Spleen (tissue), 13 donors: ENCODE measurements at regions of chr3 and their contacts with region 1.

Region 1: GRCh38 chr3:32467333-32468070 is 35.1 kb downstream of the CMTM6 start:
- DNase-seq: peak; percentile 96
- H3K4me3 ChIP-seq: peak overlapping the region; percentile 13 to 66 (median 37)
- H3K27ac ChIP-seq: peak overlapping the region; percentile 61 to 83 (median 77)
- H3K4me1 ChIP-seq: peaks cover 20 to 69% (median 47%) of the 10 kb centered on the region in 6 donors
- H3K27me3 ChIP-seq: no peaks in the 10 kb centered on the region
- CTCF ChIP-seq: peak; percentile 95 to 100 (median 98)
- POLR2A ChIP-seq: no peak

Region 2: GRCh38 chr3:32371461-32372212 is 95.9 kb before region 1 on chr3:
- intact Hi-C with region 1: loop called (anchors 2 kb)
- DNase-seq: no peak
- H3K4me3 ChIP-seq: no peak overlapping the region
- H3K27ac ChIP-seq: peak overlapping the region in 3 of 8 donors; percentile 41 to 66 (median 52)
- H3K4me1 ChIP-seq: peaks cover 0 to 21% (median 7%) of the 10 kb centered on the region in 6 donors
- H3K27me3 ChIP-seq: no peaks in the 10 kb centered on the region
- CTCF ChIP-seq: no peak
- POLR2A ChIP-seq: no peak

Region 3: DNA sequence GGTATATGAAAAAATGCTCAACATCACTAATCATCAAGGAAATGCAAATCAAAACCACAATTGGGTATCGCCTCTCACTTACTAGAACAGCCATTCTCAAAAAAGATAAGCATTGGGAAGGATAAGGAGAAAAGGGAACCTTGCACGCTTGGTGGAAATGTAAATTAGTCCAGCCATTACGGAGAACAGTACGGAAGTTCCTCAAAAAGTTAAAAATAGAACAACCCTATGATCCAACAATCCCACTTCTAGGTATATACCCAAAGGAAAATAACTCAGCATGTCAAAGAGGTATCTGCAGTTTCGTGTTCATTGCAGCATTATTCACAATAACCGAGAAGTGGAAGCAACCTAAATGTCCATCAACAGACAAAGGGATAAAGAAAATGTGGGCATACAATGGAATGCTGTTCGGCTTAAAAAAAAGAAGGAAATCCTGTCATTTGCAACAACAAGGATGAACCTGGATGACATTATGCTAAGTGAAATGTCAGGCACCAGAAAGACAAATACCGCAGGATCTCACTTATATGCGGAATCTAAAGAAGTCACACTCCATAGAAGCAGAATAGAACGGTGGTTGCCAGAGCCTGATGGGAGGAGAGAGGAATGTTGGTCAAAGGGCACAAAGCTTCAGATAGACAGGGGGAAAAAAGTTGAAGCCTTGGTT is 87.5 kb before region 1 on chr3:
- intact Hi-C with region 1: loop called (anchors 2 kb)
- DNase-seq: no peak
- H3K4me3 ChIP-seq: no peak overlapping the region
- H3K27ac ChIP-seq: no peak overlapping the region
- H3K4me1 ChIP-seq: peaks cover 0 to 13% (median 4%) of the 10 kb centered on the region in 6 donors
- H3K27me3 ChIP-seq: no peaks in the 10 kb centered on the region
- CTCF ChIP-seq: no peak
- POLR2A ChIP-seq: no peak

Region 4: DNA sequence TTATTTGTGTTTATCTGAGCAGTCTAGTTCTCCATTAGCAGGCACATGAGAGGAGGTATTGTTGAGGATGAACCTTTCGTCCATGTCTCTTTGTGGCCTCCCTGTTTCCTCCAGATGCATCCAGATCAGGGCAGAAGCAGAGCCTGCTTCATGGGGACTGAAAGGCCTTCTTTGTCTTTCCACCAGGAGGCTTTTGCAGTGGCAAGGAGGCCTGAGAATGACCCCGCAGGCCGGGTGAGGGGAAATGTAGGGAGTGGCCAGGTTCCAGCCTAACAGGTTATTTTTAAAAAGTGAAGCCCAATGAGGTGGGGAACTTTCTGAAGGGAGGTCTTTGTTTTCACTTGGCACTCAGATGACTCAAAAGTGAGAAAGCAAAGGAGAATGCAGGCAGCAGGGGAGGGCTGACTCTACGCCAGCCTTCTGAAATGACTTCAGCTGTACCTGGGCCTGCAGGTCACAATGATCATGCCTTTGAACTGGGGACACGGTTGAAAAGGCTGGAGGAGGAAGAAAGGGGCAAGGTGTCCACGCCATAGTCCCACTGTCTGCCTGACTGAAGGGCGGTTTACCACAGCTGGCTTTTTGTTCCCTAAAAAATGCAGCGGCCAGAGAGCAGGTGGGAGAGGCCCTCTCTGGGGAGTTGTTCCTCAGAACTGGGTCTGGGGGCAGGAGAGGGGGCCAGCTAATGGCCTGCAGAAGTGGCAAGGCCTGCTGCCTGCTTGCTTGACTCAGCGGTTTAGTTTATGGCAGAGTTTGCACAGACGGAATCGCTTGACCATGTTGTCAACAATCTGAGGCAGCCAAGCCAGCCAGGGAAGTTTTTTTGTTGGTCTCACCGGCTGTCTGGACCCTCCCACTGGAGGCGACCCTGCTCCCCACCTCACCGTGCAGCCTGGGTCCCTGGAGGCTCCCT is 47.1 kb before region 1 on chr3:
- intact Hi-C with region 1: loop called (anchors 5 kb)
- DNase-seq: peak; percentile 79
- H3K4me3 ChIP-seq: peak overlapping the region in 1 of 8 donors; percentile 30
- H3K27ac ChIP-seq: peak overlapping the region; percentile 65 to 87 (median 84)
- H3K4me1 ChIP-seq: peaks cover 60 to 100% (median 79%) of the 10 kb centered on the region in 6 donors
- H3K27me3 ChIP-seq: no peaks in the 10 kb centered on the region
- CTCF ChIP-seq: no peak
- POLR2A ChIP-seq: no peak